Activated B cell treated with CpG ODN at 0.5 μM for 24 hours (primary cell): ENCODE measurements at regions of chr5 and their contacts with region 1.

Region 1: GRCh38 chr5:157743163-157744050 is at the start of gene LSM11:
- DNase-seq: peak; percentile 96
- ATAC-seq: peak; percentile 96
- H3K4me3 Mint-ChIP-seq: peak within 1 kb of the TSS; percentile 92
- H3K27ac Mint-ChIP-seq: peak within 1 kb of the TSS; percentile 80
- H3K4me1 Mint-ChIP-seq: peaks cover 22% of the 10 kb centered on the region
- H3K27me3 Mint-ChIP-seq: no peaks in the 10 kb centered on the region
- CTCF ChIP-seq: peak; percentile 67
- total RNA-seq, gene LSM11: 4.6 and 5.0 TPM in 2 replicates

Region 2: DNA sequence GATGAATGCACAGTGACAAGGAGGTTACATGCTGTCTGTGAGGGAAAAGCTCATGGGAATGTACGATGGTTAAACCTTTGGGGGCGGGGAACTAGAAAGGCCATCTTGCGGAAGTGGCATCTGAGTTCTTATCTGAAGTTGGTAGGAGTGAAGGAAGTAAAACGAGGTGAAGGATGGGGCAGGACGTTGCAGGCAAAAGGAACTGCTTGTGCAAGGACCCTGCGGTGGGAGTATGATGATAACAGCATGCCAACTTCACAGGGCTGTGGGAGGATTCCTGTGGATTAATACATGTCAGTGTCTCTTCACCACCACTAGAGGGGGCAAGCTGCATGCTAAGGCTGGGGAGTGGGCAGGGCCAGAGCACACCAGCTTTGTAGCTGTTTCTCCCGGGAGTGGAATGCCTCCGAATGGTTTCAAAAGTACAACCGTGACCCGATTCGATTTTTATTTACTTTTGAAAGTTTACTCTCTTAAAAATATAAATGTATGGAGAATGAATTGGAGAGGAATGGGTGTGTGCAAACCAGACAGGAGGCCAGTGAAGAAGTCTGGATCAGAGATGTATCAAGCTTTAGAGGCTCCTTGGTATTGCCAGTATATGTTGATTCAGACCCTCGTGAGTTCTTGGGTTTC is 415.0 kb before region 1 on chr5:
- CTCF ChIA-PET with region 1: interaction called, 33 read pairs
- POLR2A ChIA-PET with region 1: no interaction called
- intact Hi-C with region 1: loop called (anchors 1 kb)
- DNase-seq: no peak
- ATAC-seq: peak; percentile 100
- H3K4me3 Mint-ChIP-seq: no peak overlapping the region
- H3K27ac Mint-ChIP-seq: peak overlapping the region; percentile 36
- H3K4me1 Mint-ChIP-seq: peaks cover 6% of the 10 kb centered on the region
- H3K27me3 Mint-ChIP-seq: no peaks in the 10 kb centered on the region
- CTCF ChIP-seq: peak; percentile 59

Region 3: GRCh38 chr5:157431544-157432200 is 311.7 kb before region 1 on chr5:
- CTCF ChIA-PET with region 1: interaction called, 49 read pairs
- POLR2A ChIA-PET with region 1: interaction called, 3 read pairs
- intact Hi-C with region 1: loop called (anchors 1 kb)
- DNase-seq: no peak
- ATAC-seq: peak; percentile 100
- H3K4me3 Mint-ChIP-seq: peak overlapping the region; percentile 0
- H3K27ac Mint-ChIP-seq: peak overlapping the region; percentile 81
- H3K4me1 Mint-ChIP-seq: peaks cover 18% of the 10 kb centered on the region
- H3K27me3 Mint-ChIP-seq: no peaks in the 10 kb centered on the region
- CTCF ChIP-seq: no peak

Region 4: GRCh38 chr5:157540707-157541446 is 202.5 kb before region 1 on chr5:
- CTCF ChIA-PET with region 1: interaction called, 3 read pairs
- POLR2A ChIA-PET with region 1: no interaction called
- intact Hi-C with region 1: loop called (anchors 1 kb)
- DNase-seq: peak; percentile 37
- ATAC-seq: peak; percentile 91
- H3K4me3 Mint-ChIP-seq: peak overlapping the region; percentile 60
- H3K27ac Mint-ChIP-seq: peak overlapping the region; percentile 92
- H3K4me1 Mint-ChIP-seq: peaks cover 86% of the 10 kb centered on the region
- H3K27me3 Mint-ChIP-seq: no peaks in the 10 kb centered on the region
- CTCF ChIP-seq: no peak

Region 5: GRCh38 chr5:157718519-157718918 is 24.9 kb before region 1 on chr5:
- CTCF ChIA-PET with region 1: interaction called, 17 read pairs
- POLR2A ChIA-PET with region 1: interaction called, 3 read pairs
- intact Hi-C with region 1: loop called (anchors 1 kb)
- DNase-seq: no peak
- ATAC-seq: peak; percentile 95
- H3K4me3 Mint-ChIP-seq: no peak overlapping the region
- H3K27ac Mint-ChIP-seq: peak overlapping the region; percentile 41
- H3K4me1 Mint-ChIP-seq: peaks cover 18% of the 10 kb centered on the region
- H3K27me3 Mint-ChIP-seq: no peaks in the 10 kb centered on the region
- CTCF ChIP-seq: no peak

Region 6: GRCh38 chr5:157799578-157799977 is 56.2 kb after region 1 on chr5:
- CTCF ChIA-PET with region 1: no interaction called
- POLR2A ChIA-PET with region 1: no interaction called
- intact Hi-C with region 1: no loop called
- DNase-seq: no peak
- ATAC-seq: no peak
- H3K4me3 Mint-ChIP-seq: no peak overlapping the region
- H3K27ac Mint-ChIP-seq: no peak overlapping the region
- H3K4me1 Mint-ChIP-seq: no peaks in the 10 kb centered on the region
- H3K27me3 Mint-ChIP-seq: no peaks in the 10 kb centered on the region
- CTCF ChIP-seq: no peak